Activated CD4-positive, alpha-beta T cell treated with anti-CD3 and anti-CD28 coated beads, Interleukin-2, amount 10 ng/mL, durations not matched to agents 7 days and 5 days (primary cell): ENCODE measurements at regions of chr3 and their contacts with region 1.

Region 1: DNA sequence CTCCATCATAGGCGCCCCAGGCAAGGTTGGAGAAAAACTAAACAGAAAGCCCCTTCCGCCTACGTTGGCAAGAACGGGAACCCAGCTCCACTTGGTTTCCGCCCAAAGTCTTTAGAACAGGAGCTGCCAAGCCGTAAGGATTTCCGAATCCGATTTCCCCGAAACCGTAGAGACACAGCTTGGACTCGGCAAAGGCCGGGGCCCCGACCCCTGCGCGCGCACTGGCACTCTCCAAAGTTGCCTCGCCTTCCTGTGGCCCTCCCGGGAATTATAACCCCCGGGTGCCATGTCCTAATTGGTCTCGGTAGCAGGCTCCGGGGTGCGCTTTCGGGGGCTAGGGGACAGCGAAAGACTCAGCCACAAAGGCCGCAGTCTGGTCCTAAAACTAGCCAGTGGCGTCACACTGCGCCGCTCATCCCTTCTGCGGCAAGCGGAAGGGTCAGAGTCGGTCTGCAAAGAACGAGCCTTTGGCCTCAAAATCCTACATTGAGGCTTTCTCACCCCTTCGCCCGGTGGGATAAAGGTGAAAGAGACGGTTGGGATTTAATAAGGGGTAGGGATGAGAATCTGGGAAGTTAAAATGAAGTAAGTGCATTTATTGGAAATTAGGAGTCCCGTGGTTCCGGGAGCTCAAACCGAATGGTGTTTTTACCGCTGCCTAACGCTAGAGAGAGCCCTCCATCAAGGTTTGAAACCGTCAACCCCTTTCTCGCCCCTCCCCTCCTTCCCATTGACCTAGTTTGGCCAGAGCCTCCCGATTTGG is 6.8 kb downstream of the BCL6 start:
- DNase-seq: peak; percentile 78
- H3K4me3 Mint-ChIP-seq: peak overlapping the region; percentile 97
- H3K27ac Mint-ChIP-seq: peak overlapping the region; percentile 100
- H3K4me1 Mint-ChIP-seq: peaks cover 52% of the 10 kb centered on the region
- H3K27me3 Mint-ChIP-seq: no peaks in the 10 kb centered on the region

Region 2: DNA sequence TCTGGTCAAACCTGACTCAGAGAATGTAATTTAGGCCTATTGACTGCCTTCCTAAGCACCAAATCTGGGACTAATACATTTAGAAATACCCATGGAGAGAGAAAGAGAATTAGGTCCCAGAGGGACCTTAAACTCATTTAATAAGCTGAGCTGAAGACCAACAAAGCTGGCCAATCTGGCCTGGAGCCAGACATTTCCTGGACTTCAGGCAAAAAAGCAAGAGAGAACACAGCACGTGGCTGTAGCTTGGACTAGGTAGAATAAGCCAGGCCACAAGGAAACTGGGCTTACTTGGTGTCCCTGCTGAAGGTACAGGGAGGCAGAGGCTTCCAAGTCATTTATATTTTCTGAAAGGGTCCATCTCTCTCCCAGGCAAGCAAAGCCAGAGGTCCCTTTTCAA is 282.3 kb before region 1 on chr3:
- CTCF ChIA-PET with region 1: no interaction called
- POLR2A ChIA-PET with region 1: no interaction called
- DNase-seq: no peak
- H3K4me3 Mint-ChIP-seq: no peak overlapping the region
- H3K27ac Mint-ChIP-seq: no peak overlapping the region
- H3K4me1 Mint-ChIP-seq: no peaks in the 10 kb centered on the region
- H3K27me3 Mint-ChIP-seq: peaks cover 11% of the 10 kb centered on the region

Region 3: GRCh38 chr3:187628169-187628568 is 110.3 kb before region 1 on chr3:
- CTCF ChIA-PET with region 1: no interaction called
- POLR2A ChIA-PET with region 1: no interaction called
- DNase-seq: no peak
- H3K4me3 Mint-ChIP-seq: no peak overlapping the region
- H3K27ac Mint-ChIP-seq: no peak overlapping the region
- H3K4me1 Mint-ChIP-seq: no peaks in the 10 kb centered on the region
- H3K27me3 Mint-ChIP-seq: peaks cover 28% of the 10 kb centered on the region

Region 4: GRCh38 chr3:187777331-187777941 is 38.9 kb after region 1 on chr3:
- CTCF ChIA-PET with region 1: no interaction called
- POLR2A ChIA-PET with region 1: no interaction called
- DNase-seq: peak; percentile 63
- H3K4me3 Mint-ChIP-seq: peak overlapping the region; percentile 31
- H3K27ac Mint-ChIP-seq: peak overlapping the region; percentile 89
- H3K4me1 Mint-ChIP-seq: peaks cover 65% of the 10 kb centered on the region
- H3K27me3 Mint-ChIP-seq: peaks cover 3% of the 10 kb centered on the region

Region 5: GRCh38 chr3:187974871-187975271 is 236.4 kb after region 1 on chr3:
- CTCF ChIA-PET with region 1: interaction called, 14 read pairs
- POLR2A ChIA-PET with region 1: no interaction called
- DNase-seq: peak; percentile 31
- H3K4me3 Mint-ChIP-seq: peak overlapping the region; percentile 40
- H3K27ac Mint-ChIP-seq: peak overlapping the region; percentile 92
- H3K4me1 Mint-ChIP-seq: peaks cover 68% of the 10 kb centered on the region
- H3K27me3 Mint-ChIP-seq: no peaks in the 10 kb centered on the region

Region 6: DNA sequence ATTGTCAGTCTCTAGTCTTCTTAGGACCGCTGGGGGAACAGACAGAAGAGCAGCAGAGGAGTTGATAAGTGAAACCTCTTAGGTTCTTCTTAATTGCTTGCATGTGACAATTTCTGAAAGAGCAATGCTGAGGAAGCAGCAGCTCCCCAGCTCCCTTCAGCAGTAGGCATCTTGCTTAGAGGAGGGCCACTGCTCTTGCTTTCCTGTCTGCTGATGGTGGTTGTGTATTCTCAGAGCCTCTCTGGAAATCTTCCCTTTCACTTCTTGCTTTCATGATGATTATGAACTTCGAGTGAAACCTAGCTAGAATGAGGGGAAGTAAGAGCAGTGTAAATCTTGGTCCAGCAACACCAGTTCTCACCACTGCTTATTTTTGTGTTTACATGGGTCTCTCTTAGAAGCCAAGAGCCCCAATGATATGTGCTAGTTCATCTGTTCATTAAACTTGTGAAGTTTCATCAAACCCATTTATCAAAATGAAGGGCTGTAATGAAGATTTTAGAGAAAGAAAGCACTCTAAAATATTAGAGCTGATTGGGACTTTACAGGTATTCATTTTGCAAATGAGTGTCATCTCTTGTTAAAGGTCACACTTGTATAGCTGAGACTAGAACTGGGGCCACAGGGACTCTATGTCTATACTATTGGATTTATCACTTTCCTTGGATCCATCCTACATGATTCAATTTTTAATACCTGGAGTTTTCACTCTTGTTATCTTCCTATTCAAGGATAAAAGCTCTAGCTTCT is 662.2 kb after region 1 on chr3:
- CTCF ChIA-PET with region 1: interaction called, 18 read pairs
- POLR2A ChIA-PET with region 1: no interaction called
- DNase-seq: peak; percentile 36
- H3K4me3 Mint-ChIP-seq: no peak overlapping the region
- H3K27ac Mint-ChIP-seq: peak overlapping the region; percentile 58
- H3K4me1 Mint-ChIP-seq: peaks cover 70% of the 10 kb centered on the region
- H3K27me3 Mint-ChIP-seq: no peaks in the 10 kb centered on the region

Region 7: GRCh38 chr3:188954590-188955208 is 1216.2 kb after region 1 on chr3:
- CTCF ChIA-PET with region 1: interaction called, 182 read pairs
- POLR2A ChIA-PET with region 1: no interaction called
- DNase-seq: peak; percentile 85
- H3K4me3 Mint-ChIP-seq: no peak overlapping the region
- H3K27ac Mint-ChIP-seq: no peak overlapping the region
- H3K4me1 Mint-ChIP-seq: peaks cover 17% of the 10 kb centered on the region
- H3K27me3 Mint-ChIP-seq: no peaks in the 10 kb centered on the region

Region 8: GRCh38 chr3:189132231-189132707 is 1393.8 kb after region 1 on chr3:
- CTCF ChIA-PET with region 1: interaction called, 25 read pairs
- POLR2A ChIA-PET with region 1: interaction called, 4 read pairs
- DNase-seq: peak; percentile 87
- H3K4me3 Mint-ChIP-seq: peak overlapping the region; percentile 62
- H3K27ac Mint-ChIP-seq: peak overlapping the region; percentile 95
- H3K4me1 Mint-ChIP-seq: peaks cover 32% of the 10 kb centered on the region
- H3K27me3 Mint-ChIP-seq: no peaks in the 10 kb centered on the region